Dorsolateral prefrontal cortex (tissue), 120 donors: ENCODE measurements at regions of chr1 and their contacts with region 1.

Region 1: DNA sequence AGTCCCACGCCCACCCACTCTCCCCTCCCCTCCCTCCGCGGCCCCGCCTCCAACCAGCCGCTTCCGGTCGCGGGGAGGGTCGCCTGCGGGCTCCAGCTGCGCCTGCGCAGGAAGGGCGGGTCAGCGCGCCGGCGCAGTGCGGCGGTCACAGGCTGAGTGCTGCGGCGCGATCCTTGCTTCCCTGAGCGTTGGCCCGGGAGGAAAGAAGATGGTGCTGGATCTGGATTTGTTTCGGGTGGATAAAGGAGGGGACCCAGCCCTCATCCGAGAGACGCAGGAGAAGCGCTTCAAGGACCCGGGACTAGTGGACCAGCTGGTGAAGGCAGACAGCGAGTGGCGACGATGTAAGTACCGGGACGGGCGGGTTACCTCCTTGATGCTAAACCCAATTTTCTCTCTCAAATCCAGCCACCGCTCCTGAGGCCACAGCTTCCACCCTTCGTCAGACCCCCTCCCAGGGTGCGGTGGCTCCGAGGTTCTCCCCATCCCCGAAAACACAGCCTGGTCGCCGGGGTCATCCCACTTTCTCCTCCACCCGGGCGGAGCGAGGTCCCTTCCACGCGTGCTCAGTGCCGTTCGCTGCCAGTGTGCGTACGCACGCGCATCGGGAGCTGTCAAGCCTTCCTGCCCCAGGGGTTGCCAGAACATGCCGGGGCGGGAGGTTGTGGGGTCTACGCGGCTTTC is at the start of gene SARS1:
- DNase-seq: peak; percentile 79 to 93 (median 85)
- H3K4me3 ChIP-seq: peak within 1 kb of the TSS; percentile 58 to 99 (median 92)
- H3K27ac ChIP-seq: peak within 1 kb of the TSS; percentile 66 to 98 (median 93)
- H3K27me3 ChIP-seq: no peaks in the 10 kb centered on the region
- CTCF ChIP-seq: peak in 12 of 56 donors; percentile 8 to 39 (median 16)
- total RNA-seq, gene SARS1: 109 to 280 (median 226) TPM

Region 2: DNA sequence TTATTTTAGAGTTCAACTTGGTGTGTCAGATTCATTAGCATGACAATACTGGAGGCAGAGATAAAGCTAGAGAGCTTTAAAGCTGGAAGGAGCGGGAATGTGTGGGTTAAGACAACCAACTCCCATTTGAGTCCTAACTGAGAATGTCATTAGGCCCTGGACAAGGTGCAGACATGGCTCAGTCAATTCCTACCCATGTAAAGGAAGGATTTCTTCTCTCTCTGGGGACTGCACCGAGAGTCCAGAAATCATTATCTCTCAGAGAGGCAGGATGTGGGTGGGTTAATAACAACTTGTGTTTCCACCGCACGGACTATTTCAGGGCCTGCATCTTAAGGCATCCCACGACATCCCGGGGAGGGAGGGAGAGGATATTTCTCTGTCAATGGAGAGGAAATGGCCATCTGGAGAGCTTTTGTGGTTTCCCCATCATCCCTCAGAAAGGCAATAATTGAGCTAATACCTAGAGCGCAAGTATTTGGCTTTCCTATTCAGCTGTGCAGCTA is 46.9 kb before region 1 on chr1:
- intact Hi-C with region 1: no loop called
- DNase-seq: no peak
- H3K4me3 ChIP-seq: no peak overlapping the region
- H3K27ac ChIP-seq: peak overlapping the region in 10 of 59 donors; percentile 7 to 51 (median 28)
- H3K27me3 ChIP-seq: no peaks in the 10 kb centered on the region
- CTCF ChIP-seq: no peak

Region 3: GRCh38 chr1:109263597-109264398 is 49.9 kb after region 1 on chr1:
- intact Hi-C with region 1: loop called in 1 of 2 experiments (anchors 5 kb)
- DNase-seq: peak; percentile 38 to 90 (median 82)
- H3K4me3 ChIP-seq: peak overlapping the region in 40 of 59 donors; percentile 0 to 57 (median 28)
- H3K27ac ChIP-seq: peak overlapping the region; percentile 71 to 100 (median 93)
- H3K27me3 ChIP-seq: no peaks in the 10 kb centered on the region
- CTCF ChIP-seq: peak; percentile 58 to 98 (median 92)

Region 4: GRCh38 chr1:109483672-109484518 is 270.0 kb after region 1 on chr1 and contains the start of gene ATXN7L2:
- intact Hi-C with region 1: loop called in 1 of 2 experiments (anchors 5 kb)
- DNase-seq: peak; percentile 76 to 93 (median 88)
- H3K4me3 ChIP-seq: peak within 1 kb of the TSS; percentile 67 to 96 (median 80)
- H3K27ac ChIP-seq: peak within 1 kb of the TSS; percentile 86 to 100 (median 99)
- H3K27me3 ChIP-seq: no peaks in the 10 kb centered on the region
- CTCF ChIP-seq: peak in 25 of 56 donors; percentile 6 to 50 (median 23)
- total RNA-seq, gene ATXN7L2: 6.6 to 31.7 (median 13.9) TPM

Region 5: DNA sequence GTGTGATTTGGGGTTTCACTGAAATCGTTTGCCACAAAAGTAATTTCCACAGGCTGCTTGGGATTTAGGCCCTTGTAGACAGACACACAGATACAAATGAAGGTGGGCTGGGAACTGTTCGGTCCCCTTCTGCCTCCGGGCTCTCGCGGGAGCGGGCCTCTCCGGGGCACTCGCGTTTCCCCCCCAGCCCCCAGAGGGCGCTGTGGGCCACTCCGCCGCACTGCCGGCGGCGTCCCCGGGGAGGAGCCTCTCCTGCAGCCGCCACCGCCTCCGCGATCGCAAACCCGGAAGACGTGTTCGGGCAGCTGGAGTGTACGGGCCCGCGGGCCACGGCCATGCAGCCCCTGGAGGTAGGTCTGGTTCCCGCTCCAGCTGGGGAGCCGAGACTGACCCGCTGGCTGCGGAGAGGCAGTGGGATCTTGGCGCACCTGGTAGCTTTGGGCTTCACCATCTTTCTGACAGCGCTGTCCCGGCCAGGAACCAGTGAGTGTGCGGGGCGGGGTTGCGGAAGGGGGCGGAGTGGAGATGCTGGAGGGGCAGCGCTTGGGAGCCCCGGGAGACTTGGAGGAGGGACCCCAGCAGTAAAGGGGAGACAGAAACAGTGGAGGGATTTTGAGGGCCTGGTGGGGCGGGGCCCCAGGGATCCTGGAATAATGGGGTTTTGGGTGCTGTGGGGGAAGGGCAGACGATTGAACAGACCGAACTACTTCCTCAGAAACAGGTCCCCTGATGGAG is 280.0 kb after region 1 on chr1 and contains the start of gene CYB561D1:
- intact Hi-C with region 1: loop called in 1 of 2 experiments (anchors 10 kb)
- DNase-seq: peak; percentile 70 to 91 (median 84)
- H3K4me3 ChIP-seq: peak within 1 kb of the TSS; percentile 50 to 99 (median 88)
- H3K27ac ChIP-seq: peak within 1 kb of the TSS in 58 of 59 donors; percentile 15 to 95 (median 84)
- H3K27me3 ChIP-seq: no peaks in the 10 kb centered on the region
- CTCF ChIP-seq: peak; percentile 74 to 99 (median 93)
- total RNA-seq, gene CYB561D1: 9.4 to 21.7 (median 14.9) TPM